ENCODE measurements at regions of chr7 and their contacts with region 1.

Region 1: GRCh38 chr7:84188786-84189405 is 5.7 kb downstream of the SEMA3A start:
- DNase-seq: no peak
- ATAC-seq: peak; percentile 71

Region 2: GRCh38 chr7:83970081-83970480 is 218.8 kb before region 1 on chr7:
- intact Hi-C with region 1: loop called (anchors 5 kb)
- DNase-seq: no peak
- ATAC-seq: no peak

Measured in Right ventricle myocardium superior (tissue), 1 donor.